Dendritic cell treated with granulocyte-macrophage colony-stimulating factor and Interleukin-4, amounts not matched to agents 40 ng/mL and 50 ng/mL, for 4 days (primary cell): ENCODE measurements at regions of chr16 and their contacts with region 1.

Region 1: DNA sequence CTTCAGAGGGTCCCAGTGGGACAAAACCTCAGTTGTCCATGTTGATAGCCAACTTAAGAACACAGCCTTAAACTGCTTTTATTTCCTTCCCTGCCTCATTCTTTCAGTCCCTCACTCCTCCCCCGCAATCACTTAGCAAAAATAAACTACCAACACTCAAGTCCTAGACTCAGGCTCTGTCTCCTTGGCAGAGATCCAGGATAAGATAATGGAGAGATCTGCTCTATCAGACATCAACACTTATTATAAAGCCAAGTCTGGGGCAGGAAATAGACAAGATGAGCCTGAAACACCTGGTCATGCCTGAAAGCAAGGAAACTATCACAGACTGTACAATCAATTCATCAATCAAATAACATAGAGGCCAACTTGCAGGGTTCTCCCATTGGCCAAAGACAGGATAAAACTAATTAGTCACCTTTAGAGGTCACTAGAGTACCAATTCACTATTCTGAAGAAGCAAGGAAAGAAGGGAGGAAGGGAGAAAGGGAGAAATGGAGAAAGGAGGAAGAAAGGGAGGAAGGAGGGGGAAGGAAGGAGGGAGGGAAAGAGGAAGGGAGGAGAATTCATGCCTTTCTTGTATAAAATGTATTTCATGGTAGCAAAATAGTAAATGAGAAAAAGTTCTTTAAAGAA is 15.7 kb downstream of the HYDIN start:
- H3K4me3 Mint-ChIP-seq: no peak overlapping the region
- H3K27ac Mint-ChIP-seq: no peak overlapping the region
- H3K4me1 Mint-ChIP-seq: no peaks in the 10 kb centered on the region
- H3K27me3 Mint-ChIP-seq: peaks cover 12% of the 10 kb centered on the region

Region 2: GRCh38 chr16:71255721-71256120 is 40.9 kb after region 1 on chr16:
- intact Hi-C with region 1: no loop called
- H3K4me3 Mint-ChIP-seq: no peak overlapping the region
- H3K27ac Mint-ChIP-seq: peak overlapping the region; percentile 73
- H3K4me1 Mint-ChIP-seq: peaks cover 59% of the 10 kb centered on the region
- H3K27me3 Mint-ChIP-seq: peaks cover 14% of the 10 kb centered on the region

Region 3: DNA sequence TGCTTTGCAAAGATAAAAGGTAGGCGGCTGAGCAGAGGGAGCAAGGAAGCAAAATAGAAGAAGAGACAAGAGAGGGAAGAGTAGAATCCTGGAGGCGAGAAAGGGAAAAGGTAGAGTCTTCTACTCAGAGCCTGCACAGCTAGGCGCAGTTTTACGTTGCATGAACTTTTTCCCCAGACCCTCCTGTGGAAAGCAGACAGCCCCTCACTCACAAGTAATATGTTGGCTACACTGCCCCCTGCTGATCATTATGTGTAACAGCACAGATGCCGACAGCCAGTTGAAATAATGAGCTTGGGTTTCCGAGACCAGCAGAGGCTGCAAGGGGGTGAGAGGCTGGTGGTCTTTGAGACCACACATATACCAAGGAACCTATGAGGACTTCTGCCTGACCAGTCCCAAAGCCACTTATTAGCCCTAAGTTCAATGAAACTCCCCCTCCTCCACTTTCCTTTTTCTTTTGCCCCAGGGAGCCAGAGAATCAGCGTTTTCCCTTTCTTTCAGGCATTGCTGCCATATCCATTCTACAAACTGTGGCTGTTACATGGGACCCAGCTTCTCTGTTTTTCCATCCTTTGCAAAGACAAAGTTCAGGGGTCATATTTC is 96.8 kb after region 1 on chr16:
- intact Hi-C with region 1: loop called (anchors 1 kb)
- H3K4me3 Mint-ChIP-seq: no peak overlapping the region
- H3K27ac Mint-ChIP-seq: no peak overlapping the region
- H3K4me1 Mint-ChIP-seq: no peaks in the 10 kb centered on the region
- H3K27me3 Mint-ChIP-seq: peaks cover 17% of the 10 kb centered on the region

Region 4: DNA sequence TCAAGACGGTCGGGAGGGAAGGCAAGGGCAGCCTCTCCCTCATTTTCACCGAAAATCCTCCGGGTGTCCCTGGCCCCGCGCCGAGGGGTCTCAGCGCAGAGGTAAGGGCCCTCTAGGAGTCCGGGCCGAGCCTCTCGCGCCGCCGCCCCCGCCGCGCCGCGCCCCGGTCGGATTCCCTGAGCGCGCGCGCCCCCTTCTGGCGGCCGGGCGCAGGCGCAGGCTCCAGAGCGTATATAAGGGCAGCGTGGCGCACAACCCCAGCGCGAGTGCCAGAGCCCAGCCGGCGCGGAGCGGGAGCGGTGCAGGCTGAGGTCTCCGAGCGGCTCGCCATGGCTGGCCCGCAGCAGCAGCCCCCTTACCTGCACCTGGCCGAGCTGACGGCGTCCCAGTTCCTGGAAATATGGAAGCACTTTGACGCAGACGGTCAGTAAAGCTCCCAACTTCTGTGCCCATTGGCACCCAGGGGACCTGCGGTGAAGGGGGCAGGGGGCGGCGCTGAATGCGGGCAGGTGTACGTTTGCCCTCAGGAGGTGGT is 143.7 kb after region 1 on chr16 and contains the start of gene CALB2:
- intact Hi-C with region 1: loop called (anchors 1 kb)
- H3K4me3 Mint-ChIP-seq: peak within 1 kb of the TSS; percentile 27
- H3K27ac Mint-ChIP-seq: no peak within 1 kb of the TSS
- H3K4me1 Mint-ChIP-seq: no peaks in the 10 kb centered on the region
- H3K27me3 Mint-ChIP-seq: peaks cover 24% of the 10 kb centered on the region